ENCODE measurements at regions of chr11 and their contacts with region 1.

Region 1: GRCh38 chr11:22006901-22007300 is 186.0 kb upstream of the ANO5 start:
- DNase-seq: peak; percentile 8
- H3K4me3 ChIP-seq: no peak overlapping the region
- H3K27ac ChIP-seq: no peak overlapping the region
- H3K4me1 ChIP-seq: no peaks in the 10 kb centered on the region
- H3K27me3 ChIP-seq: no peaks in the 10 kb centered on the region
- CTCF ChIP-seq: no peak; the same call in 1 of the 2 replicates

Region 2: GRCh38 chr11:21963013-21963412 is 43.9 kb before region 1 on chr11:
- CTCF ChIA-PET with region 1: no interaction called
- POLR2A ChIA-PET with region 1: no interaction called
- intact Hi-C with region 1: loop called (anchors 5 kb)
- DNase-seq: no peak
- H3K4me3 ChIP-seq: no peak overlapping the region
- H3K27ac ChIP-seq: no peak overlapping the region
- H3K4me1 ChIP-seq: no peaks in the 10 kb centered on the region
- H3K27me3 ChIP-seq: no peaks in the 10 kb centered on the region
- CTCF ChIP-seq: no peak